ENCODE measurements at regions of chr1 and their contacts with region 1.

Region 1: GRCh38 chr1:210233216-210234020 is 822 bp downstream of the SERTAD4 start:
- DNase-seq: no peak
- H3K4me3 ChIP-seq: peak overlapping the region; percentile 59
- H3K27me3 ChIP-seq: no peaks in the 10 kb centered on the region
- CTCF ChIP-seq: no peak

Region 2: DNA sequence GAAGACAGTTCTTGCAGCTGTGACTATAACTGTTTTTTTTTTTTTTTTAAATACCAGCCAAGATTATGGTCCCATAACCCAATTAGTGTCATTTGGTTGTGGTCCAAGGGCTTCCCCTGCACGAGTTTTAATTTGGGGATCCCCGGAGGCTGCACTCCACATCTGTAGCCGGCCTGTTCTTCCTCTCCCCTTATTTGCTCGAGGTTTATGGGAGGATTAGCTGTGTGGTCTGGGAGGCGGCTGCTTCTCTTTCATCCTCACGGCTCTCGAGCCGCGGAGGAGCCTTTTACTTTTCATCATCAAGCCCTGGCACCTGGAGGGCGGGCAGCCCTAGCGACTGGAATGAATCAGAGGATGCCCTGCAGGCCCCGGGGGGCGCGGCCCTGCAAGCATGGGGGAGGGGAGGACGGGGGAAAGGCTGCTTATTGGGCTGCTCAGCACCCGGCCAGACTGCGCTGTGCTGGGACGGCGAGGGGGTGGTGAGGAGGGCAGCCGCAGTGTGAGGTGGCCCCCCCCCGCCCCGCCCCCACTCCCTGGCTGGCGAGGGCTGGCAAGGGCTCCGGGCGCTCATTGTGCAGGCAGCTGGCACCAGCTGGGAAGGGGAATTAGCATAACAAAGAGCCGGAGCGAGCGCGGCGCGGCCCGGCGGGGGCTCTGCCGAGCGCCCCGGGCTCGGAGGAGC is 17.7 kb after region 1 on chr1:
- CTCF ChIA-PET with region 1: interaction called, 3 read pairs
- POLR2A ChIA-PET with region 1: interaction called, 12 read pairs
- DNase-seq: no peak
- H3K4me3 ChIP-seq: peak overlapping the region; percentile 37
- H3K27me3 ChIP-seq: peaks cover 3% of the 10 kb centered on the region; the same call in 1 of the 2 replicates
- CTCF ChIP-seq: peak; percentile 14; the same call in 1 of the 2 replicates

Region 3: DNA sequence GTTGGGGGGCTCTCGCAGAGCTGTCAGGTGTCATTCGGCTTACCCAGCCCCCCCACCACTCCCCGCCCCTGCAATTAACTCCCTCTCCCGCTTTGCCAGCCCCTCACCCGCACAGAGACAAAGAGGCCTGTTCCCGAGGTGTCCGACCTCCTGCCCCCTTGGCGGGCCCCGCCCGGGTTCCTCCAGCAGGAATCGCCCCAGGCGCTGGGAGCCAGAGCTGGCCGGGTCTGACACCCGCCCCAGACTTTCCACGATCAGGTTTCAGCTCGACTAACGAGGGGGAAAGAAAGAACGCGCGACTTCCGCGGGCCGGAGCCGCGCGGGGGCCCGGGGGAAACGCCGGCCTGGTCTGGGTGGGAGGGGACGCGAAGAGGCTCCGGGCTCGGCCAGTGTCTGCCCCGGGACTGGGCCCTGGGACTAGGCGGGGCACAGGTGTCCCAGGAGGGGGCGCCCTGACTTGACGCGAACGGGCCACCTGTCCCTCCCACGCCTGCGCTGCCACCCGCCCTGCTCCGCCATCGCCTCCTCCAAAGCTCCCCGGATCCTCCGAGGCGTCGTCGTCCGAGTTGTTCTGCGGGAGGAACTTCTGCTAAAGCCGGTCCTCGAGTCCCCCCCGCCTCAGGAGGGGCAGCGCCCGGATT is 58.9 kb after region 1 on chr1:
- CTCF ChIA-PET with region 1: interaction called, 3 read pairs
- POLR2A ChIA-PET with region 1: interaction called, 12 read pairs
- DNase-seq: no peak
- H3K4me3 ChIP-seq: peak overlapping the region; percentile 35
- H3K27me3 ChIP-seq: no peaks in the 10 kb centered on the region; the same call in 1 of the 2 replicates
- CTCF ChIP-seq: peak; percentile 16; the same call in 1 of the 2 replicates

Region 4: GRCh38 chr1:210301615-210302000 is 68.2 kb after region 1 on chr1:
- CTCF ChIA-PET with region 1: interaction called, 4 read pairs
- POLR2A ChIA-PET with region 1: interaction called, 14 read pairs
- DNase-seq: no peak
- H3K4me3 ChIP-seq: no peak overlapping the region
- H3K27me3 ChIP-seq: no peaks in the 10 kb centered on the region
- CTCF ChIP-seq: no peak

Region 5: GRCh38 chr1:210347112-210347511 is 113.7 kb after region 1 on chr1:
- CTCF ChIA-PET with region 1: no interaction called
- POLR2A ChIA-PET with region 1: no interaction called
- DNase-seq: peak; percentile 17
- H3K4me3 ChIP-seq: no peak overlapping the region
- H3K27me3 ChIP-seq: no peaks in the 10 kb centered on the region
- CTCF ChIP-seq: no peak

Measured in BJ (cell line).